Heart right ventricle (tissue), 16 donors: ENCODE measurements at regions of chr11 and their contacts with region 1.

Region 1: DNA sequence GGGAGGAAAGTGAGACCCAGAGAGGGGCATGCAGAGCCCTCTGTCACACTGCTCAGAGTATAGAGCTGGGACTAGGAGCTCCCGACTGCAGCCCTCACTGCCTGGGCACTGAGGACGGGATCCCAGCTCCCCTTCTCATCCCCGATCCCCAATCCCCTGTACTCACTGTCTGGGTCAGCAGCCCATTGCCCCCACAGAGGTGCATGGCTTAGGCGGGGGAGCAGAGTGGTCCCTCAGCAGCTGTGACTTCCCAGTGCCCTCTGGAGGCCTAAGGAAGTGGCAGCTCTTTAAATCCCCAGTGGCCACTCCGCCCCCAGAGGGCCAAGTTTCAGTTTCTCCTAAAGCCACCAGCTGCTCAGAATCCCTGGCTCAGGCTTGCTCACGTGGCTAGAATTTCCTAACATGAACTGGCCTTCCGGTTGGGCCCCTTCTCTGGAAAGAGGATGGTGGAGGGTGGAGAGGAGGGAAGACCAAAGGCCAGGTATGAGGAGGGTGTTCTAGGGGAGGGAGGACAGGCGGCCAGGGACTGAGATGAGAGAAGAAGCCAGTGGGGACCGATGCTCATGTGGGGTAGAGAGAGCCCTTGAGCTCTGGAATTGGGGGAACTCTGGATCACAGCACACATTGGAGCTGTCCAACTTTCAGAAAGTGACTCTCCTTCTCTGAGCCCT is at the start of gene BATF2:
- DNase-seq: peak; percentile 70 to 82
- ATAC-seq: peak; percentile 86 to 96 (median 92)
- H3K4me3 ChIP-seq: peak within 1 kb of the TSS; percentile 1 to 65 (median 52)
- H3K27ac ChIP-seq: peak within 1 kb of the TSS in 9 of 10 donors; percentile 41 to 88 (median 72)
- H3K4me1 ChIP-seq: peaks cover 0 to 51% (median 17%) of the 10 kb centered on the region in 9 donors
- H3K27me3 ChIP-seq: no peaks in the 10 kb centered on the region
- CTCF ChIP-seq: peak in 8 of 9 donors; percentile 22 to 62 (median 48)
- total RNA-seq, gene BATF2: 0.66 to 31.8 (median 1.7) TPM

Region 2: DNA sequence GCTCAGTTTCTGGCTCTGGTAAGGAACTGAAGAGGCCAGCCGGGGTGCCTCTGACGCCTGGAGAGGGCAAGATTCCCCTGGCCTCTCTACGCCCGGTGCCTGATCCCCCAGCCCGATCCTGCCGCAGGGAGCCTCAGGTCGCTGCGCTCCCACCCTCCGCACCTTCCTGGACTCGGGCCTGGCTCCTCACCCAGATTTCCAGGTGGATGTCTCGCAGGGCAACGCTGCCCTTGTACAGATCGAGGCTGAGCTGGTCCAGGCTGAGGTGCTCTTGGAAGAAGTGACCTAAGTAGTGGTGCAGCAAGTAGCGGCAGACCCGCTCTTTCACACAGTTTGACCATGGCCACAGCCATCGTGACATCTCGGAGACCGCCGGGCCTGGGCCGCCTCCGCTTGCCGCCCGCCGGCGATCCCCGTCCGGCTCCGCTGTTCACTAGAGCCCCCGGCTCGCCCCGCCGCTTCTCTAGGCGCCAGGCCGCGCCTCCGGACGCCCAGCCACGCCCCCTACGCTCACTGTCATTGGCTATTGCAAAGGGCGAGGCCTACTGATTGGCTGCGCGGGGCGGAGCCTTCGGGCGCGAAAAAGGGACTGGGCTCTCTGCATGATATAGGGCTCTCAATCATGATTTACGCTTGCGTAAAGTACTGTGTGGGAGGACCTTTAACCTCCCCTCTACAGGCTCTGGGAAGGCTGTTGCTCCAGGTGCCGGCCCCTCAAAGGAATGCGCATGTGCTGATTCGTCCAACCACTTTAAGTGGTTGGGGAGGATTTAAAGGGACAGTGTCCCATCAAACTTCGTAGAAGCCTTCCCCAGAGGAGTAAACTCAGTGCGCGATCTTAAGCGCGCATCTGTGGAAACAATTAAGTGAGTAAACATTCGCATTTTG is 79.8 kb before region 1 on chr11 and contains the start of gene ATG2A:
- intact Hi-C with region 1: loop called in 3 of 10 experiments (anchors 5 to 10 kb)
- DNase-seq: peak; percentile 99
- ATAC-seq: peak; percentile 97 to 100 (median 98)
- H3K4me3 ChIP-seq: peak within 1 kb of the TSS; percentile 63 to 98 (median 86)
- H3K27ac ChIP-seq: peak within 1 kb of the TSS; percentile 27 to 96 (median 84)
- H3K4me1 ChIP-seq: peaks cover 5 to 43% (median 34%) of the 10 kb centered on the region in 9 donors
- H3K27me3 ChIP-seq: no peaks in the 10 kb centered on the region
- CTCF ChIP-seq: peak in 1 of 9 donors; percentile 11
- total RNA-seq, gene ATG2A: 12.4 to 17.7 (median 16.0) TPM